Activated naive CD4-positive, alpha-beta T cell treated with anti-CD3 and anti-CD28 coated beads for 36 hours (primary cell): ENCODE measurements at regions of chr10 and their contacts with region 1.

Region 1: GRCh38 chr10:26430641-26431164 is 7.4 kb upstream of the APBB1IP start:
- DNase-seq: peak; percentile 64
- H3K4me3 Mint-ChIP-seq: peak overlapping the region; percentile 46
- H3K27ac Mint-ChIP-seq: peak overlapping the region; percentile 83
- H3K4me1 Mint-ChIP-seq: peaks cover 26% of the 10 kb centered on the region
- H3K27me3 Mint-ChIP-seq: no peaks in the 10 kb centered on the region

Region 2: GRCh38 chr10:25999295-25999981 is 431.3 kb before region 1 on chr10:
- CTCF ChIA-PET with region 1: no interaction called
- intact Hi-C with region 1: no loop called
- DNase-seq: no peak
- H3K4me3 Mint-ChIP-seq: no peak overlapping the region
- H3K27ac Mint-ChIP-seq: no peak overlapping the region
- H3K4me1 Mint-ChIP-seq: no peaks in the 10 kb centered on the region
- H3K27me3 Mint-ChIP-seq: peaks cover 8% of the 10 kb centered on the region

Region 3: DNA sequence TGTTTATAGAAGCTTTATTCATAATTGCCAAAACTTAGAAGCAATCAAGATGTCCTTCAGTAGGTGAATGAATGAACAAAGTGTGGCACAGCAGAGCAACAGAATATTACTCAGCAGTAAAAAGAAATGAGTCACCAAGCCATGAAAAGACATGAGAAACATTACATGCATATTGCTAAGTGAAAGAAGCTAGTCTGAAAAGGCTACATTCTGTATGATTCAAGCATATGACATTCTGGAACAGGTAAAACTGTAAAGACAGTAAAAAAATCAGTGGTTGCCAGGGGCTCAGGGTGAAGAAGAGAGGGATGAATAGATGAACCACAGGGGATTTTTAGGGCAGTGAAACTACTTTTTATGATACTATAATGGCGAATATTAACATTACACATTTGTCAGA is 73.5 kb before region 1 on chr10:
- CTCF ChIA-PET with region 1: no interaction called
- intact Hi-C with region 1: loop called (anchors 1 kb)
- DNase-seq: peak; percentile 32
- H3K4me3 Mint-ChIP-seq: no peak overlapping the region
- H3K27ac Mint-ChIP-seq: no peak overlapping the region
- H3K4me1 Mint-ChIP-seq: peaks cover 13% of the 10 kb centered on the region
- H3K27me3 Mint-ChIP-seq: no peaks in the 10 kb centered on the region

Region 4: DNA sequence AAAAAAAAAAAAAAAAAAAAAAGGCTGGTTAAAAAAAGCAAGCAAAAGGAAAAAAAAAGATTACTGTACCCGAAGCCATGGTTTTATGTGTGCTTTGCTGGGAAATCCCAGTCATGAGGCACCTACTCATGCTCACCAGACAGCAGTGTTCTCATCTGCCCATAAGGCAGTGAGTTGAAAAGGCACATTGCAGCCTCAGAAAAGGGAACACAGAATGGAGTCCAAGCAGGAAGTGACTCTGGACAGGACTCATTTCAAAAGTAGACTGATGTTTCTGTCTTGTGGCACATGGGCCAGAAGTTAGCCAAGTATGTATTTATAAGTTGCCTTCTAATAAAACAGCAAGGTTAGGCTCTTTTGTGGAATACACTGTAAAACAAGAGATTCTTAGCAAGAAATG is 307.0 kb after region 1 on chr10:
- CTCF ChIA-PET with region 1: no interaction called
- intact Hi-C with region 1: loop called (anchors 5 kb)
- DNase-seq: peak; percentile 75
- H3K4me3 Mint-ChIP-seq: no peak overlapping the region
- H3K27ac Mint-ChIP-seq: peak overlapping the region; percentile 88
- H3K4me1 Mint-ChIP-seq: peaks cover 36% of the 10 kb centered on the region
- H3K27me3 Mint-ChIP-seq: no peaks in the 10 kb centered on the region